ENCODE measurements at regions of chr5 and their contacts with region 1.

Region 1: DNA sequence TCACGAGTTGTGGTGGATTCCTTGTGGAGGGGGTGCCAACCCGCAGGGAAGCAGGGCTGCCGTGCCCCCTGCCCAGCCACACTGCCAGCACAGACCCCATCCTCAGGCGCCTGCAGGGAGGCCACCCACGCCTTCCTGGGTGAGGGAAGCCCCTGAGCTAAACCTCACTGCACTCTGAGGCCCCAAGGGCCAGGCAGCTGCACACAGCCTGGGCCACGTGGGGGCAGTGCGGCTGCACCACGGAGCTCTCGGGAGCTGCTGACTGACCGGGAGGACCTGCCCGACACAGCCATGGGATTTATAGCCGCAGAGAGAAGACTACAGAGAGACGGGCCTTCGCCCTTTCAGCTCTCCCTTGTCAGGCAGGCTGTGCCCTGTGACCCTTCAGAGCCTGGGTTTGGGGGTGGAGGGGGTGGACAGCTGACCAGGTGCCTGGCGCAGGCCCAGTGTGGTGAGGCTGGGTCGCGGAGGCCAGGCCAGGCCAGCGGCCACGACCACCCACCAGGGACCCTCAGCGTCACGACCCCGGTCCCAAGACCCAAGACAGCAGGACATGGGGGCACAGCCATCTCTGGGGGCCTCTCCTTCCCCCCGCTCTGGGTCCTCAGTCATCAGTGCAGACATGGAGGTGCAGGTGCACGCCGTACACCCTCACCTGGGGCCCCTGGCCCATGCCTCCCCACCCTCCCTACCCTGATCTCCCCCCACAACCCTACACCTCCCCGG is 4.3 kb upstream of the AHRR start:
- DNase-seq: no peak
- H3K4me3 ChIP-seq: no peak overlapping the region
- H3K27me3 ChIP-seq: no peaks in the 10 kb centered on the region
- CTCF ChIP-seq: peak; percentile 89

Region 2: GRCh38 chr5:285639-286557 is 31.4 kb before region 1 on chr5:
- CTCF ChIA-PET with region 1: interaction called, 10 read pairs
- POLR2A ChIA-PET with region 1: no interaction called
- DNase-seq: no peak
- H3K4me3 ChIP-seq: no peak overlapping the region
- H3K27me3 ChIP-seq: no peaks in the 10 kb centered on the region
- CTCF ChIP-seq: no peak

Region 3: DNA sequence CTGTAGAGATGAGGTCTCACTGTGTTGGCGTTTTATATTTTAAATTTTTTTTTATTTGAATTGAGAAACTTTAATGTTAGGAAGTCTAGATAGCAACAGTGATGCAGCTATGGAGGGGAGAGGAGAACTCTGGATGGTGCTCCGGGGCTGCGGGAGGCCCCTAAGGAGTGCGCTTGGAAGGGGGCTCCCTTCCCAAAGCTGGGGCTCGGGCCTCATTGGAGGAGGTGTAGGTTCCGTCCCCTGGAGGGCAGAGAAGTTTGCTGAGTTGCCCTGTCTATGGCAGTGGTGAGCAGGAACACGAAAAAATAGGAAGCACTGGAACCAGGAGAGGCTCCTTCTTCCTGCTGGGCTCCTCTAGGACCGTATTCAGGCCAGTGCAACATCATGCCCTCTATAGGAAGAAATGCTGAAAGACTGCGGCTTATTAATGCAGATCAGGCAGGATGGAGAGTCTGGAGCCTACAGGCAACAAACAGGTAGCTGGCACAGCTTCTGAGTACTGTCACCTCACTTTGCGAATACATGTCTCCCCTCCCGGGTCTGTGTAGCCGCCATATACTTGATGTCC is 20.4 kb after region 1 on chr5:
- CTCF ChIA-PET with region 1: interaction called, 11 read pairs
- POLR2A ChIA-PET with region 1: interaction called, 4 read pairs
- DNase-seq: no peak
- H3K4me3 ChIP-seq: no peak overlapping the region
- H3K27me3 ChIP-seq: no peaks in the 10 kb centered on the region; the same call in 1 of the 2 replicates
- CTCF ChIP-seq: peak; percentile 64

Region 4: DNA sequence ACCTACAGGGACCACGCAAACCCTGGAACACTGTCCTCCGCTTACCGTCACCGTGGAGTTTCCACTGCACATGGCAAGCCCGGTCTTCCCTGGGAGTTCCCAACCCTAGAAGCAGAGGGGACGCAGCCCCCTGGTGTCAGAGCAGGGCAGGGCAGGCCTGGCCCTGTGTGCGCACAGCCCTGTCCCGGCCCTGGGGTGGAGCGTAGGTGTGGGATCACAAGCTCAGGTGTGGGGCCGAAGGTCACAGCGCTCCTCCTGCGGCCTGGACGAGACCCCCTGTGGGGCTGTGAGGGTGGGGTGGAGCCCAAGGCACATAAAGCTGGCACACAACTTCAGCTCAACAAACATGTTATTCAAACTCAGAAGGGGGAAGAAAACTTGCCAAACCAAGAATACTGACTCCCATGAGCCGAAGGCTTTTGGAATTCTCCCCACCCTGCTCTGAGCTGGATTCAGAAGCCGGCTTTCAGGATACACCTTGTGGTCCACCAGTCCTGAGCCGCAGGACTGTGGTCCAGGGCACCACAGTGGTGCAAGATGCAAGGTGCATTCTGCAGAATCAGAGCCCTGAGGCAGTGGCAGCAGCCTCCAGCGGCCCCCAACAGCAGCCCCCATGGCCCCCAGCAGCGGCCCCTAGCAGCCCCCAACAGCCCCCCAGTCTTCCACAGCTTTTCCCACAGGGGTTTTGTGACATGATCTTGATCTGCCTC is 113.9 kb after region 1 on chr5:
- CTCF ChIA-PET with region 1: interaction called, 60 read pairs
- POLR2A ChIA-PET with region 1: no interaction called
- DNase-seq: no peak
- H3K4me3 ChIP-seq: no peak overlapping the region
- H3K27me3 ChIP-seq: no peaks in the 10 kb centered on the region
- CTCF ChIP-seq: peak; percentile 74

Region 5: DNA sequence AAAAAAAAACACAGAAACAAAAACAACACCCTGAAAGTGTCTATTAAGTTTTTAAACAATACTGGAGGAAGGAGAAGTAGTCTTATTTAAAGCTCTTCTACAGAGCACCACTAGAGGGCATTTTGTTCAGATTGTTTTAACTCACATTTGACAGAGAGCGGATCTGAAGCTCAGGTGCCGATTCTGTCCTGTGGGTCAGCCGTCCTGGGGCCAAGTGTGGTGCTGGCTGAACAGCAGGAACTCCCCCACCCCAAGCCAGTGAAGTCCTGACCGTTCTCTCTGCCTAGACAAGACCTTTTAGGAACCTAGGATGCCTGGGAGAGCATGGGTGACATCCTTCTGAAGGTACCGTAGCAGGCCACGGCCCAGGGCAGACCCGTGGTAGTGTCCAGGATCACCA is 129.6 kb after region 1 on chr5:
- CTCF ChIA-PET with region 1: interaction called, 14 read pairs
- POLR2A ChIA-PET with region 1: no interaction called
- DNase-seq: no peak
- H3K4me3 ChIP-seq: no peak overlapping the region
- H3K27me3 ChIP-seq: no peaks in the 10 kb centered on the region
- CTCF ChIP-seq: peak; percentile 63

Region 6: DNA sequence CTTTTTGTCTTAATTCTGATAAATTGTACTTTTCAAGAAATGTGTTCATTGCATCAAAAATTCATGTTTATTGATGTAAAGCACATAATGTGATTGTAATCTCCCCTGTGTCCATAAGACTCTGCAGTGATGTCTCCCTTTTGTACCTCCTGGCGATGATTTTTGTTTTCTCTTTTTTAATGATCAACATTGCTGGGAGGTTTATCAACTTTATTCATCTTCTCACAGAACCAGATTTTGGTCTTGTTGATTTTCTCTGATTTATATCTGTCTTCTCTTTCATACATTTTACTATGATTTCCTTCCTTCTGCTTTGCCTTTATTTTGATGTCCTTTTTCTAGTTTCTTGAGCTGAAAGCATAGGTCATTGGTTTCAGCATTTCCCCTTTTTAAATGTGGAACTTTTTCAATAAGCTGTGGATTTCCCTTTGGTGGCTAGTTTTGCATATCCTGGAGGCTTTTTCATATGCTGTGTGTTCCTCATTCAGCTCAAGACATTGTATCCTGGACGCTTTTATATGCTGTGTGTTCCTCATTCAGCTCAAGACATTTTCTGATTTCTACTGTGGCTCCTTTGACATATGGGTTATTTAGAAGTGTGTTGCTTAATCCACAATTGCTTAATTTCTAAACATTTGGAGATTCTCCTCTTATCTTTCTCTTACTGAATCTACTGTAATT is 212.6 kb after region 1 on chr5:
- CTCF ChIA-PET with region 1: no interaction called
- POLR2A ChIA-PET with region 1: no interaction called
- DNase-seq: no peak
- H3K4me3 ChIP-seq: no peak overlapping the region
- H3K27me3 ChIP-seq: peaks cover 41% of the 10 kb centered on the region
- CTCF ChIP-seq: no peak

Region 7: GRCh38 chr5:902129-902916 is 585.1 kb after region 1 on chr5:
- CTCF ChIA-PET with region 1: interaction called, 11 read pairs
- POLR2A ChIA-PET with region 1: no interaction called
- DNase-seq: no peak
- H3K4me3 ChIP-seq: no peak overlapping the region
- H3K27me3 ChIP-seq: no peaks in the 10 kb centered on the region
- CTCF ChIP-seq: no peak